Spleen (tissue), 13 donors: ENCODE measurements at regions of chr16 and their contacts with region 1.

Region 1: GRCh38 chr16:10964039-10964890 is 19.9 kb downstream of the CLEC16A start:
- DNase-seq: peak; percentile 94
- H3K4me3 ChIP-seq: peak overlapping the region in 1 of 8 donors; percentile 27
- H3K27ac ChIP-seq: peak overlapping the region in 3 of 8 donors; percentile 13 to 29 (median 18)
- H3K4me1 ChIP-seq: peaks cover 4 to 45% (median 27%) of the 10 kb centered on the region in 6 donors
- H3K27me3 ChIP-seq: no peaks in the 10 kb centered on the region
- CTCF ChIP-seq: peak; percentile 73 to 98 (median 94)
- POLR2A ChIP-seq: no peak

Region 2: DNA sequence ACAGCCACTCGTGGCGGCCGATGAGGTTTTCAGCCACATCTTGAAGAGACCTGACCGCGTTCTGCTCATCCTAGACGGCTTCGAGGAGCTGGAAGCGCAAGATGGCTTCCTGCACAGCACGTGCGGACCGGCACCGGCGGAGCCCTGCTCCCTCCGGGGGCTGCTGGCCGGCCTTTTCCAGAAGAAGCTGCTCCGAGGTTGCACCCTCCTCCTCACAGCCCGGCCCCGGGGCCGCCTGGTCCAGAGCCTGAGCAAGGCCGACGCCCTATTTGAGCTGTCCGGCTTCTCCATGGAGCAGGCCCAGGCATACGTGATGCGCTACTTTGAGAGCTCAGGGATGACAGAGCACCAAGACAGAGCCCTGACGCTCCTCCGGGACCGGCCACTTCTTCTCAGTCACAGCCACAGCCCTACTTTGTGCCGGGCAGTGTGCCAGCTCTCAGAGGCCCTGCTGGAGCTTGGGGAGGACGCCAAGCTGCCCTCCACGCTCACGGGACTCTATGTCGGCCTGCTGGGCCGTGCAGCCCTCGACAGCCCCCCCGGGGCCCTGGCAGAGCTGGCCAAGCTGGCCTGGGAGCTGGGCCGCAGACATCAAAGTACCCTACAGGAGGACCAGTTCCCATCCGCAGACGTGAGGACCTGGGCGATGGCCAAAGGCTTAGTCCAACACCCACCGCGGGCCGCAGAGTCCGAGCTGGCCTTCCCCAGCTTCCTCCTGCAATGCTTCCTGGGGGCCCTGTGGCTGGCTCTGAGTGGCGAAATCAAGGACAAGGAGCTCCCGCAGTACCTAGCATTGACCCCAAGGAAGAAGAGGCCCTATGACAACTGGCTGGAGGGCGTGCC is 57.1 kb before region 1 on chr16:
- intact Hi-C with region 1: no loop called
- DNase-seq: peak; percentile 72
- H3K4me3 ChIP-seq: no peak overlapping the region
- H3K27ac ChIP-seq: peak overlapping the region in 1 of 8 donors; percentile 14
- H3K4me1 ChIP-seq: peaks cover 0 to 33% (median 6%) of the 10 kb centered on the region in 6 donors
- H3K27me3 ChIP-seq: no peaks in the 10 kb centered on the region
- CTCF ChIP-seq: no peak
- POLR2A ChIP-seq: no peak

Region 3: DNA sequence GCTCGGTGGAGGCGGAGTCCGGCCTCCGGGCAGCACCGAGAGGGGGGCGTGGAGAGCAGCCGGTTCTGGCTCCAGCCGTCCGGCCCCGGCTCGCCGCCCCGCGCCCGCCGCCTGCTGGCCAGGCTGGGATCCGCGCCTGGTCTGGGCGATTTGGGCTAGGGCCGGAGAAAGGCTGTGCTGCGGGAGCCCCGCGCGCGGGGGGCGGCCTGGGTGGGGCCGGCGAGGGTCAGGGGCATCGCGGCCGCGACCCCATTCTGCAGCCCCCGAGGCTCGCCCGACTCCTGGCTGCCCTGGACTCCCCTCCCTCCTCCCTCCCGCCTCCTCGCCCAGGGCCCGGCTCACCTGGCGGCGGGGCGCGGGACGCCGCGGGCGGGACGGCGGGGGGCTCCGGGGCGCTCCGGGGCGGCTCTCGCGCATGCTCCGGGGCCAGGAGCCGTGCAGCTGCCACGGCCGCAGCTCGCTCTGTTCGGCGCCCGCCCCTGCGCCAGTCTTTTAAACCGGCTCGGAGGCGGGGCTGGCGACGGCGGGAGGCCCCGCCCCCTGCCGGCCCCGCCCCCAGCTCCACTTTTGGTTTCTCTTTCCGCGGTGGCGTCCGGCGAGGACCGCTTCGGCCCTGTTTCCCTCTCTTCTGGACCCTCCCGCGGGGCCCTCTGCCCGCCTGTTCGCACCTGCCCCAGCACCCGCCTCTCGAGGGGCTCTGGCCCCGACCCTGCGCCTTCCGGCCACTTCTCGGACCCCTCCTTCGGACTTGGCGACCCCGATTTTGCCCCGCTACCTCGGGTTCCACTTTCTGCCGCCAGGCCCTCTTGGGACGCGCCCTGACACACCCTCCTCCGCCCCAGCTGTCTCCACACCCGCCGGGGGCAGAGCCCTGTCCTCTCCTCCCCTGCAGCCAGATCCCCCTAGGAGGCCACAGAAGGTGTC is 291.7 kb after region 1 on chr16 and contains the start of gene SOCS1:
- intact Hi-C with region 1: loop called (anchors 5 kb)
- DNase-seq: peak; percentile 96
- H3K4me3 ChIP-seq: peak within 1 kb of the TSS; percentile 61 to 97 (median 89)
- H3K27ac ChIP-seq: peak within 1 kb of the TSS; percentile 85 to 99 (median 97)
- H3K4me1 ChIP-seq: peaks cover 31 to 76% (median 65%) of the 10 kb centered on the region in 6 donors
- H3K27me3 ChIP-seq: peaks cover 0 to 8% (median 0%) of the 10 kb centered on the region in 7 donors
- CTCF ChIP-seq: peak; percentile 79 to 97 (median 94)
- POLR2A ChIP-seq: peak; percentile 5 to 99 (median 82)
- total RNA-seq, gene SOCS1: 7.7 to 50.8 (median 24.0) TPM

Region 4: GRCh38 chr16:11356573-11357331 is 392.5 kb after region 1 on chr16:
- intact Hi-C with region 1: loop called (anchors 5 kb)
- DNase-seq: peak; percentile 88
- H3K4me3 ChIP-seq: no peak overlapping the region
- H3K27ac ChIP-seq: no peak overlapping the region
- H3K4me1 ChIP-seq: peaks cover 30 to 73% (median 46%) of the 10 kb centered on the region in 6 donors
- H3K27me3 ChIP-seq: peaks cover 0 to 56% (median 5%) of the 10 kb centered on the region in 7 donors
- CTCF ChIP-seq: peak; percentile 33 to 79 (median 69)
- POLR2A ChIP-seq: no peak

Region 5: DNA sequence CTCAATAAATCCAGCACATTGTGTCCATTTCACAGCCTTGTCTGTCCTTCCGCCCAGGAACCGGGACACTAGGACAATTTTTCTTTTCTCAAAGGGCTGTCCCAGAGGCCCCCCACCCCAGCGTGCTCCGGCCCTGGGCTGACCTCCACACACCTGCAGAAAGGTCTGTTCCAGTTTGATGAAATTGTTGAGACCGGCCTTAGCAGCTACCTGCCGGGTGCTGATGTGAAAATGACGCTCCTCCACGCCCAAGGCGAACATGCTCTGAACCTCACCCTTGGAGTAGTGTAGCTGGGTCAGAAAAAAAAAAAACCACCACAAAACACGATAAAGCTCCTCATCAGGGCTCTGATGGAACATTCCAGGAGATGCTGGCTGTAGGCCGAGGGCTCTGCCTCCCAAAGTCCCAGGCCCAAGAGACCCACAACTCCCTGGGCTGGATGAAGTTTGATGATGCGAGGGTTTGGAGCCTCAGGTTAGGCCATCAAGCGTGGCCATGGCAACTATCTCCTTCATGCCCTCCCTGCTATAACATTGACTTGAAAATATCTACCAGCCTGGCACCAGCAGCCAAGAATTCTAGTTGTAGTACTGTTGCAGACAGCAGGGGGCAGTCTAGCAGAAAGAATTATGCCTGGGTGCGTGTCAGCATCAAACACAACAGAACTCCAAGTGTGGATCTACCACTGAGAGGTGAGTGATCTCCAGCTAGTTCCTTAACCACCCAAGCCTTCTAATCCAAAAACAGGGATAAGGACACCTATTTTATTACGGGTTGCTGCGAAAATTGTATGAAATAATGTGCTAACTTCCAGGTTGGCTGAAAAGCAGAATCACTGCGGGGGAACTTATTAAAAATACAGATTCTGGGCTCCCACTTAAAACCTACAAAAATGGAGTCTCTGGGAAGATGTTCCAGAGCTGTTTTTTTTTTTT is 443.1 kb after region 1 on chr16:
- intact Hi-C with region 1: loop called (anchors 10 kb)
- DNase-seq: no peak
- H3K4me3 ChIP-seq: no peak overlapping the region
- H3K27ac ChIP-seq: no peak overlapping the region
- H3K4me1 ChIP-seq: peaks cover 0 to 16% (median 0%) of the 10 kb centered on the region in 6 donors
- H3K27me3 ChIP-seq: no peaks in the 10 kb centered on the region
- CTCF ChIP-seq: peak; percentile 43 to 82 (median 75)
- POLR2A ChIP-seq: no peak

Region 6: GRCh38 chr16:11715246-11715947 is 751.1 kb after region 1 on chr16:
- intact Hi-C with region 1: loop called (anchors 10 kb)
- DNase-seq: no peak
- H3K4me3 ChIP-seq: no peak overlapping the region
- H3K27ac ChIP-seq: peak overlapping the region in 2 of 8 donors; percentile 1 to 31
- H3K4me1 ChIP-seq: peaks cover 0 to 57% (median 12%) of the 10 kb centered on the region in 6 donors
- H3K27me3 ChIP-seq: no peaks in the 10 kb centered on the region
- CTCF ChIP-seq: no peak
- POLR2A ChIP-seq: no peak